Activated CD4-positive, alpha-beta memory T cell treated with anti-CD3 and anti-CD28 coated beads, Interleukin-2, amount 10 ng/mL, durations not matched to agents 7 days and 5 days (primary cell): ENCODE measurements at regions of chr2 and their contacts with region 1.

Region 1: DNA sequence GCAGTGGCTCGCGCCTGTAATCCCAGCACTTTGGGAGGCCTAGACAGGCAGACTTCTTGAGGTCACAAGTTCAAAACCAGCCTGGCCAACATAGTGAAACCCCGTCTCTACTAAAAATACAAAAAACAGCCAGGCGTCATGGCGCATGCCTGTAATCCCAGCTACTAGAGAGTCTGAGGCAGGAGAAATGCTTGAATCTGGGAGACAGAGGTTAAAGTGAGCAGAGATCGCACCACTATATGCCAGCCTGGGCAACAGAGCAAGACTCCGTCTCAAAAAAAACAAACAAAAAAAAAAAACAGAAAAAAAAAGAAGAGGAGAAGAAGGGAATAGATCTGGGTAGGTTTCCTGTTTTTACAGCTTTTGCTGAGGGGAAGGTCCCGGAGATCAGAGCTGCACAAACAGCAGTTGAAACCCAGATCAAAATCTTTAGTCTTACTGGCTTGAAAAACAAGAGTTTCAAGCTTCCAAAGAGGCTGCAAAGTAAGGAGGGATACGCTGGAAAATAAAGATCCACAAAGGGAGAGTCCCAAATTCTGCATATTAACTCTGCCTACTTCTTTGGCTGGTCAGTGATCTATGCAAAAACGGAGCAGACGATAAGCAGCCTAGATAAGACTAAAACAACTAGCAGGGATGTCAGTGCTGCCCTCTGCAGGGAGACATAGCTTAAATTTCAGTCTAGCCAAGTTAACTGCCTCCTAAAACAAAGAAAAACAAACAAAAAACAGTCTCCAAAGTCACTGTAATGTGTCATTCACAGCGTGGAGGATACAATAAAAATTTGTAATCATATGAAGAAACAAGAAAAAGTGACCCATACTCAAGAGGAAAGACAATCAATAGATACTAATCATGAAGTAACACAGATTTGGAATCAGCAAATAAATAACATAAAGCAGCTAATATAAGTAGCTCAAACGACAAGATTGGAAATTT is 74.1 kb downstream of the TLK1 start:
- DNase-seq: peak; percentile 54
- H3K4me3 Mint-ChIP-seq: peak overlapping the region; percentile 48
- H3K27ac Mint-ChIP-seq: no peak overlapping the region
- H3K4me1 Mint-ChIP-seq: peaks cover 32% of the 10 kb centered on the region
- H3K27me3 Mint-ChIP-seq: no peaks in the 10 kb centered on the region

Region 2: DNA sequence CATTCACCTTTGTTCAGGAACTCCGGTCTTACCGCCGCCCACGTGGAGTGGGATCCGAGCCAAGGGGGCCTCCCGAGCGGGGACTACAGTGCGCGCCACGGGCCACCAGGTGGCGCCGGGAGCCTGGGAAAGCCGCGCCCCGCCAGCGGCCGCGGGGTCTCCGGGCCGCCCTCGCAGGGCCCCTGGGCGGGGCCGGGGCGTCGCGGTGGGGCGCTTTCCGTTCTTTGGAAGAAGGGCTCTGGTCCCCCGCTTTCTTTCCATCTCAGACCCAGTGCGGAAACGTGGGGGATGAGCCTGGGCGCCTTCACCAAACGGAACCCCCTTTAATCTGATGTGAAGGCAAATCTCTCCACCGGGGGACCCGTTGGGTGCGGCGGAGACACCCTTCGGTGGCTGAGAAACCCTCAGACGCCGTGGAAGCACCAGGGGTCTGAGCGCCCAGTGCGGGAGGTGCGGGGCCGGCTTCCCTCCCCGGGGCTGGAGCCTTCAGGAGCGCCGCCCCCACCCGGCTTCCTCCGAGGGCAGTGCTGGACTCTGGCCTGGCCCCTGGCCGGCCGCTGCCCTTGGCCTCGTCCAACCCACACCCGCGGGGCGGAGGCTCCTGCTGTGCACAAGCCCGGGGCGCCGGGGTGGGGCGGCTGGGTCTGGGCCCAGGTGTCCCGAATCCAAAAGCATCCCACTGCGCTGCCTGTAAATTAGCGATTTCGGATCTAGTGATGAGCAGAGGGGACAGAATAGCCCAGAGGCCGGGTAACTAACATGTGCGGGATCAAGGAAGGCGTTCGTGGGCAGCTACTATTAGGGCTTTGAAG is 112.9 kb before region 1 on chr2:
- CTCF ChIA-PET with region 1: interaction called, 27 read pairs
- POLR2A ChIA-PET with region 1: interaction called, 3 read pairs
- DNase-seq: peak; percentile 82
- H3K4me3 Mint-ChIP-seq: peak overlapping the region; percentile 71
- H3K27ac Mint-ChIP-seq: no peak overlapping the region
- H3K4me1 Mint-ChIP-seq: peaks cover 7% of the 10 kb centered on the region
- H3K27me3 Mint-ChIP-seq: peaks cover 3% of the 10 kb centered on the region

Region 3: GRCh38 chr2:171008550-171009205 is 77.9 kb before region 1 on chr2:
- CTCF ChIA-PET with region 1: interaction called, 12 read pairs
- POLR2A ChIA-PET with region 1: no interaction called
- DNase-seq: no peak
- H3K4me3 Mint-ChIP-seq: no peak overlapping the region
- H3K27ac Mint-ChIP-seq: no peak overlapping the region
- H3K4me1 Mint-ChIP-seq: no peaks in the 10 kb centered on the region
- H3K27me3 Mint-ChIP-seq: no peaks in the 10 kb centered on the region

Region 4: DNA sequence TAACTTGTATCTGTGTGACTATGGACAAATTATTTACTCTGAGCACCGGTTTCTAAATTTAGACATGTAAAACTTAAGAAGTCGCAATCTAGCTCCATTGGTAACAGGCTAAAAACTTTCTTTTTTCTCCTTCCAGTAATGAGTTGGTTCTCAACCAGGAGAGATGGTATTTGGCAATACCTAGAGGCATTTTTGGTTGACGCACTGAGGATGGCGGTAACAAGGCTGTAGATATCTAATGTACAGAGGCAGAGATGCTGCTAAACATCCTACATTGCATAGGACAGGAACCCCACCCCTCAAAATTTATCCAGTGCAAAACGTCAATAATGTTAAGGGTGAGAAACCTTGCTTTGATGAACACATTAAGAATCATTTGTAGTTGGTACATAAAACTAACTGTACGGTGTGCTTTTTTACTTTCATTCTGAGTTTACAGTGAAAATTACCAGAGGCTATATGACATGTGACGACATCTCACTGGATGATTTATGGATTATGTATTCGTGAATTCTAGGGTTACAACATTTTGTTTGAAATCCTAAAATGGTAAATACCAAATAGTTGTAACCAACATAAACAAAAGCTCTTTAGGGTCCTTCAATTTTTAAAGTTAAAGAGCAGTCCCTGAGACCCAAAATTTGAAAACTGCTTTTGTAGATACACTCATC is 17.2 kb before region 1 on chr2:
- CTCF ChIA-PET with region 1: interaction called, 11 read pairs
- POLR2A ChIA-PET with region 1: no interaction called
- DNase-seq: no peak
- H3K4me3 Mint-ChIP-seq: no peak overlapping the region
- H3K27ac Mint-ChIP-seq: no peak overlapping the region
- H3K4me1 Mint-ChIP-seq: no peaks in the 10 kb centered on the region
- H3K27me3 Mint-ChIP-seq: no peaks in the 10 kb centered on the region

Region 5: GRCh38 chr2:171201271-171201670 is 114.7 kb after region 1 on chr2:
- CTCF ChIA-PET with region 1: no interaction called
- POLR2A ChIA-PET with region 1: no interaction called
- DNase-seq: no peak
- H3K4me3 Mint-ChIP-seq: no peak overlapping the region
- H3K27ac Mint-ChIP-seq: no peak overlapping the region
- H3K4me1 Mint-ChIP-seq: no peaks in the 10 kb centered on the region
- H3K27me3 Mint-ChIP-seq: no peaks in the 10 kb centered on the region